ENCODE measurements at regions of chr11 and their contacts with region 1.

Region 1: GRCh38 chr11:5831196-5831829 is 10.4 kb downstream of the OR52E6 start:
- DNase-seq: no peak
- H3K4me3 ChIP-seq: no peak overlapping the region
- H3K27ac ChIP-seq: no peak overlapping the region
- H3K4me1 ChIP-seq: no peaks in the 10 kb centered on the region
- H3K27me3 ChIP-seq: no peaks in the 10 kb centered on the region
- CTCF ChIP-seq: no peak
- POLR2A ChIP-seq: no peak

Region 2: GRCh38 chr11:6251120-6251733 is 419.9 kb after region 1 on chr11:
- intact Hi-C with region 1: loop called (anchors 5 kb)
- DNase-seq: peak; percentile 28 to 73
- H3K4me3 ChIP-seq: no peak overlapping the region
- H3K27ac ChIP-seq: no peak overlapping the region
- H3K4me1 ChIP-seq: no peaks in the 10 kb centered on the region
- H3K27me3 ChIP-seq: no peaks in the 10 kb centered on the region
- CTCF ChIP-seq: peak; percentile 39 to 93 (median 76)
- POLR2A ChIP-seq: no peak

Region 3: GRCh38 chr11:7364660-7365059 is 1533.3 kb after region 1 on chr11:
- intact Hi-C with region 1: loop called (anchors 10 kb)
- DNase-seq: no peak
- H3K4me3 ChIP-seq: no peak overlapping the region
- H3K27ac ChIP-seq: no peak overlapping the region
- H3K4me1 ChIP-seq: no peaks in the 10 kb centered on the region
- H3K27me3 ChIP-seq: no peaks in the 10 kb centered on the region
- CTCF ChIP-seq: no peak
- POLR2A ChIP-seq: no peak